HCT116 (cell line): ENCODE measurements at regions of chr10 and their contacts with region 1.

Region 1: DNA sequence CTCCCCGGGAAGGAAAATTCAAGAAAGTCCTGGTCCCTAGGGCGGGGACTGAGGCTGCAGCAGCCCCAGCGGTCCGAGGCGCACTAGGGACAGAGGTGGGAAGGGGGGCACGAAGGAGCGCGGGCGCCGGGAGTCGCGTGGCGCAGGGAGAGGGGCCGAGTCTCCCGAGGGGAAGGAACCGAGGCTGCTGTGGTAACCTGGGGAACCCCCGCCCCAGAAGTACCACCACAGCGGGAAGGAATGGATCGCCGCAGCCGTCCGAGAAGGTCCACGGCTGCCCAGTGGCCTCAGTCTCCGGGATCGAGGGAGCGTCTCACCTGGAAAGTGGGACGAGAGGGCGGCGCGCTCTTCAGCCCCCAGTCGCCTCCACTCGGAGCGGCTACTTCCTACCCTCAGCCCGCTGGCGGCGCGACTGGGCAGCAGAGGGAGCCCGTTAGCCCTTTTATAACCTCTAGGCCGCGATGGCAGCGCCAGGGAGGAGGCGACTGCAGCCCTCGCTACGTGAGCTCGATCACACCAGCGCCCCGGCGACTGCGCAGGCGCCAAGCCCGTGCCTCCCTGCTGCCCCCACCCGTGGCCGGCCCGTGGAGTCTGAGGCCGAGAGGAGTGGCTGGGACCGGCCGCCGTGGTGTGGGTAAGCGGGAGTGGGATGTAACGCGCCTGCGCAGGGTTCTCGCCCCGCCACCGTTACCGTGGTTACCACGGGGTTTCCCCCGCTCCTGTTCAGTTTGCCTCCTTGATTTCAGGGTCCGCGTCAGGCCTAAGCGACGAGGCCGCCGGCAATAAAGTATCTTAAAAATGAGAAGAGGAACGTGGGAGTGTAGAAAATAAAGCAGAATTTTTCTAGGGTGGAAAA is at the start of gene P4HA1:
- DNase-seq: peak; percentile 91
- ATAC-seq: peak; percentile 92
- H3K4me3 ChIP-seq: peak within 1 kb of the TSS; percentile 81 to 91
- H3K27ac ChIP-seq: peak within 1 kb of the TSS; percentile 82
- H3K4me1 ChIP-seq: peaks cover 13 to 23% of the 10 kb centered on the region in 2 experiments; a peak in 3 of 4 replicates
- H3K27me3 ChIP-seq: no peaks in the 10 kb centered on the region
- CTCF ChIP-seq: peak; percentile 44 to 65 (median 50); a peak in 5 of 6 replicates
- POLR2A ChIP-seq: peak; percentile 96
- RAD21 ChIP-seq: peak; percentile 81
- total RNA-seq, gene P4HA1: 49.7 TPM

Region 2: GRCh38 chr10:72875250-72876055 is 221.2 kb before region 1 on chr10:
- CTCF ChIA-PET with region 1: no interaction called
- POLR2A ChIA-PET with region 1: no interaction called
- RAD21 ChIA-PET with region 1: no interaction called
- intact Hi-C with region 1: no loop called
- DNase-seq: peak; percentile 12
- ATAC-seq: peak; percentile 52; the same call in 1 of the 2 replicates
- H3K4me3 ChIP-seq: no peak overlapping the region
- H3K27ac ChIP-seq: no peak overlapping the region
- H3K4me1 ChIP-seq: no peaks in the 10 kb centered on the region
- H3K27me3 ChIP-seq: no peaks in the 10 kb centered on the region
- CTCF ChIP-seq: peak; percentile 47 to 73 (median 59); a peak in 5 of 6 replicates
- POLR2A ChIP-seq: no peak
- RAD21 ChIP-seq: peak; percentile 87

Region 3: GRCh38 chr10:73110345-73110849 is 13.7 kb after region 1 on chr10 and contains the start of gene NUDT13:
- CTCF ChIA-PET with region 1: interaction called, 4 read pairs
- POLR2A ChIA-PET with region 1: interaction called, 27 read pairs
- RAD21 ChIA-PET with region 1: no interaction called
- intact Hi-C with region 1: no loop called
- DNase-seq: peak; percentile 42
- ATAC-seq: peak; percentile 80
- H3K4me3 ChIP-seq: peak within 1 kb of the TSS; percentile 53 to 57
- H3K27ac ChIP-seq: peak within 1 kb of the TSS; percentile 62
- H3K4me1 ChIP-seq: peaks cover 7 to 18% of the 10 kb centered on the region in 2 experiments
- H3K27me3 ChIP-seq: no peaks in the 10 kb centered on the region
- CTCF ChIP-seq: no peak
- POLR2A ChIP-seq: peak; percentile 25
- RAD21 ChIP-seq: no peak
- total RNA-seq, gene NUDT13: 1.2 TPM

Region 4: GRCh38 chr10:73159038-73159648 is 62.5 kb after region 1 on chr10:
- CTCF ChIA-PET with region 1: interaction called, 13 read pairs
- POLR2A ChIA-PET with region 1: interaction called, 3 read pairs
- RAD21 ChIA-PET with region 1: no interaction called
- intact Hi-C with region 1: loop called (anchors 1 kb)
- DNase-seq: no peak
- ATAC-seq: 0 out of 2 replicates have a peak, but pooled peaks have one; percentile 53
- H3K4me3 ChIP-seq: no peak overlapping the region
- H3K27ac ChIP-seq: no peak overlapping the region
- H3K4me1 ChIP-seq: no peaks in the 10 kb centered on the region
- H3K27me3 ChIP-seq: no peaks in the 10 kb centered on the region
- CTCF ChIP-seq: peak; percentile 65 to 75 (median 68)
- POLR2A ChIP-seq: no peak
- RAD21 ChIP-seq: peak; percentile 80

Region 5: DNA sequence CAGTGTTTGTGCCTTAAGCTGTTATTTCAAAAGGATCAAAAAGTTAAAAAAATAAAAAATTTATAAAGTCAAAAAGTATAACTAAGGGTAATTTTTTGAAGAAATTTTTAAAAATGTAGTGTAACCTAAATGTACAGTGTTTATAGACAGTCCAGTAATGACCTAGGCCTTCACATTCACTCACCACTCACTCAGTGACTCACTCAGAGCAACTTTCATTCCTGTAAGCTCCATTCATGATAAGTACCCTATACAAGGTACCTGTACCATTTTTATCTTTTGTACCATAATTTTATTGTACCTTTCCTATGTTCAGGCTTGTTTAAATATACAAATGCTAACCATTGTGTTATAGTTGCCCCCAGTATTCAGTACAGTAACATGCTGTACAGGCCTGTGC is 128.8 kb after region 1 on chr10:
- CTCF ChIA-PET with region 1: no interaction called
- POLR2A ChIA-PET with region 1: no interaction called
- RAD21 ChIA-PET with region 1: no interaction called
- intact Hi-C with region 1: no loop called
- DNase-seq: no peak
- ATAC-seq: no peak
- H3K4me3 ChIP-seq: no peak overlapping the region
- H3K27ac ChIP-seq: no peak overlapping the region
- H3K4me1 ChIP-seq: no peaks in the 10 kb centered on the region
- H3K27me3 ChIP-seq: no peaks in the 10 kb centered on the region
- CTCF ChIP-seq: no peak
- POLR2A ChIP-seq: no peak
- RAD21 ChIP-seq: no peak